ENCODE measurements at regions of chr10 and their contacts with region 1.

Region 1: DNA sequence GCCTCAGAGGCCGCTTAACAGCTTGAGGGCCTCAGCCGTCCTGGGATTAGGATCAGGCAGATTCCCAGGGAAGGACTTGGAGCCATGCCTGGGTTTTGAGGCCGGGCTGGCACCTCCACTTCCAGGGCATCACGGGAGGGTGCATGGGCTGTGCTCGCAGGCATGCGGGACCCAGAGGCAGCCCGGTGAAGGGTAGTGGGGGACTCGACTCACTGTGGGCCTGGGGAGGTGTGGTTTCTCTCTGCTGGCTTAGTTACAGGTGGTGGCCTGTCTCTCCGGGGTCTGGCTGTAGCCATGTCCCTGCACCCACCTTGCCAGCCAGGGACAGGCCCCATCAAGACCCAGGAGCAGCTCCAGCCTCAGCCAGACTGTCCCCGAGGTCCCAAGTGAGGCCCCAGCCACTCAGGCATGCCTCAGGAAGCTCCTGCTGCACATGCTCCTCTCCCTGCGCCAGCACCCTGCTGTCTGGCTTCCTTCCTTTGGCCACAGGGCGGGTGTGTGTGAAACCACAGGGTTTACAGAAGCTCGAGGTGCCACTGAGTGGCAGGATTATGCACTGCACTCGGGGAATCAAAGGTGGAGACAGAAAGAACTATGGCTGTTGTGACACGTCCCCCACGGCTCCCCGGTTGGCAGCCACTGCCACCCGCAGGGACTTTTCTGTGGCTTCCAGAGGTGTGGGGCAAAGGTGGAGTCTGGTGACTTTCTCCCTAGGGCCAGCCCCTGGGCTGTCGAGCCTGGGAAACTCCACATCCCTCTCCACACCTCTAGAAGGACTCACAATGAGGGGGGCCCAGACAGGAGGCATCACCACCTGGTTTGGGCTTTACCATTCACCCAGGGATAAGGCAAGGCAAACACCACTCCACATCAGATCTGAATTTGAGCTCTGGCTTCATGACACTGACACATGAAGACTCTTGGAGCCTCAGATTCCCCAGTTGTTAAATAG is 19.7 kb downstream of the GOLGA7B start:
- DNase-seq: peak; percentile 85 to 96 (median 88)
- ATAC-seq: peak; percentile 98 to 99 (median 99)
- H3K4me3 ChIP-seq: no peak overlapping the region
- H3K27ac ChIP-seq: peak overlapping the region in 3 of 4 donors; percentile 30 to 58 (median 46)
- H3K4me1 ChIP-seq: peaks cover 6 to 9% (median 7%) of the 10 kb centered on the region in 3 donors
- H3K27me3 ChIP-seq: no peaks in the 10 kb centered on the region
- CTCF ChIP-seq: peak; percentile 71 to 93 (median 87)

Region 2: GRCh38 chr10:97759158-97759887 is 110.0 kb before region 1 on chr10:
- intact Hi-C with region 1: loop called in 2 of 3 experiments (anchors 5 kb)
- DNase-seq: peak; percentile 62 to 90 (median 82)
- ATAC-seq: peak; percentile 66 to 94 (median 87)
- H3K4me3 ChIP-seq: no peak overlapping the region
- H3K27ac ChIP-seq: no peak overlapping the region
- H3K4me1 ChIP-seq: peaks cover 0 to 6% (median 0%) of the 10 kb centered on the region in 3 donors
- H3K27me3 ChIP-seq: no peaks in the 10 kb centered on the region
- CTCF ChIP-seq: peak; percentile 79 to 89 (median 86)

Region 3: DNA sequence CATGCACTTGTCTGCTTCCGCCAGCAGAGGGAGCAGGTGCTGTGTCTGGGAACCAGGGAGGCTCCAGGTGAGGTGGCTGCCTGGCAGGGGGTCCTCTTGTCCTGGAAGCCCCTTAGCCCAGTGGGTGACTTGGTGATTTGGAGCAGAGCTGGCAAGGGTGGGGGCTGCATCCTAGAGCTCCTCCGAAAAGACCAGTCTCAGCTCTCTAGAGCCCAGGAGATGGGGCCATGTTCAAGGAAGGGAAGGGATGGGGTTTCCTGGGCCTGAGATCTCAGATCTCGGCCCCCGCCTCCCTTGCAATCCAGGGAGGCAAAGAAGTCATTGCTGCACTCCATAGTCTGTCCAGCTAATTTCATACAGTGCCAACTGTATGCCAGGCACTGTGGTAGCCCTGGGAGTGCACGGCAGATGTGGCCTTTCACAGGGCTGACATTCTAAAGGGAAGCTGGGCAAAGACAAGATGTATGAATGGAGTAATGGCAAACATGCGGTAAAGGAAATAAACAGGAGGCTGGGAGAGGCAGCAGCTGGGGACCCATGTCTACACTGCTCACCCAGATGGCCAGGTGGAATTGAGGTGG is 77.1 kb before region 1 on chr10:
- intact Hi-C with region 1: loop called in 2 of 3 experiments (anchors 5 to 10 kb)
- DNase-seq: peak; percentile 81 to 91 (median 89)
- ATAC-seq: peak; percentile 56 to 70 (median 63)
- H3K4me3 ChIP-seq: peak overlapping the region in 1 of 4 donors; percentile 11
- H3K27ac ChIP-seq: peak overlapping the region; percentile 59 to 88 (median 76)
- H3K4me1 ChIP-seq: peaks cover 22 to 35% (median 31%) of the 10 kb centered on the region in 3 donors
- H3K27me3 ChIP-seq: no peaks in the 10 kb centered on the region
- CTCF ChIP-seq: peak; percentile 83 to 92 (median 88)

Region 4: GRCh38 chr10:97914837-97915211 is 45.5 kb after region 1 on chr10:
- intact Hi-C with region 1: no loop called
- DNase-seq: peak; percentile 79 to 94 (median 90)
- ATAC-seq: peak; percentile 92 to 97 (median 96)
- H3K4me3 ChIP-seq: no peak overlapping the region
- H3K27ac ChIP-seq: no peak overlapping the region
- H3K4me1 ChIP-seq: no peaks in the 10 kb centered on the region
- H3K27me3 ChIP-seq: no peaks in the 10 kb centered on the region
- CTCF ChIP-seq: peak; percentile 93 to 97 (median 94)

Measured in pancreas (tissue), 10 donors.